Activated naive CD4-positive, alpha-beta T cell treated with anti-CD3 and anti-CD28 coated beads, Interleukin-2, amount 10 ng/mL, durations not matched to agents 7 days and 5 days (primary cell): ENCODE measurements at regions of chr2 and their contacts with region 1.

Region 1: GRCh38 chr2:176454893-176455811 is 185.9 kb downstream of the MTX2 start:
- DNase-seq: peak; percentile 87
- H3K4me3 Mint-ChIP-seq: no peak overlapping the region
- H3K27ac Mint-ChIP-seq: no peak overlapping the region
- H3K4me1 Mint-ChIP-seq: no peaks in the 10 kb centered on the region
- H3K27me3 Mint-ChIP-seq: peaks cover 40% of the 10 kb centered on the region

Region 2: GRCh38 chr2:176186024-176186423 is 269.1 kb before region 1 on chr2:
- CTCF ChIA-PET with region 1: no interaction called
- DNase-seq: no peak
- H3K4me3 Mint-ChIP-seq: no peak overlapping the region
- H3K27ac Mint-ChIP-seq: no peak overlapping the region
- H3K4me1 Mint-ChIP-seq: peaks cover 23% of the 10 kb centered on the region
- H3K27me3 Mint-ChIP-seq: peaks cover 86% of the 10 kb centered on the region

Region 3: DNA sequence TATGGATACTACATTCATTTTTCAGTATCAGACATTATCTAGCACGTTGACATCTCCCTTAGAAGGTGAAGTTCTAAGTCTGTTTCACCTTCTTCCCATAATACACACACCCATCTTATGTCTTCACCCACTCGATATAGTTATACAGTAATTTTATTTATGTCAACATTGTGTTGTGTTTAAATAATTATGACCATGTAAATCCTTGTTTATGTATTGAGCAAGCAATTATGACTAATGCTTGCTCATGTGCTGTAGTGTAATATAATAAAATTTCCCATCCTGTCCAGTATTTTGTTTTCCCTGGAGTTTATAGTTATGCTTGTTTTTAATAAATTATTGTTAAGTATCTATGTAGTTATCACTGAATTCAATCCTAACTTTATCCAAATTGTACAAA is 22.7 kb before region 1 on chr2:
- CTCF ChIA-PET with region 1: no interaction called
- DNase-seq: no peak
- H3K4me3 Mint-ChIP-seq: no peak overlapping the region
- H3K27ac Mint-ChIP-seq: no peak overlapping the region
- H3K4me1 Mint-ChIP-seq: no peaks in the 10 kb centered on the region
- H3K27me3 Mint-ChIP-seq: no peaks in the 10 kb centered on the region

Region 4: DNA sequence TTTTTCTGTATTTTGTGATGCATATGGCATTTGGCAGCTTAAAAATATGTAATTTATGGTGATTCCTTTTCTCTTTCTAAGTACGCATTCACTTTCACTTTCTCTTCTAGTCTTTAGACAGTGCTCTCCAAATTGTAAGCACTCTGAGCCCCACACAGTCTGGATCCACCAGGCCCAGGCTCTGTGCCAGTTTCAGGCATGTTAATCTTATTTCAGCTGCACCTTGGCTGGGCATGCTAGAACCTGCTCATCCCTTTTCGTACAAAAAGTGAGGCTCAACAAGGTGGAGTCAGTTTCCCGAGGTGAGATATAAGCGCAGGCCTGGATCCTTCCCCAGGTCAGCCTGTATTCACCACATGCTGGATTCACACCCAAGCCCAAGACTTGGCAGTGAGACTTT is 18.0 kb after region 1 on chr2:
- CTCF ChIA-PET with region 1: interaction called, 10 read pairs
- DNase-seq: peak; percentile 51
- H3K4me3 Mint-ChIP-seq: peak overlapping the region; percentile 56
- H3K27ac Mint-ChIP-seq: peak overlapping the region; percentile 2
- H3K4me1 Mint-ChIP-seq: peaks cover 18% of the 10 kb centered on the region
- H3K27me3 Mint-ChIP-seq: peaks cover 5% of the 10 kb centered on the region

Region 5: GRCh38 chr2:176508984-176509740 is 54.0 kb after region 1 on chr2:
- CTCF ChIA-PET with region 1: no interaction called
- DNase-seq: no peak
- H3K4me3 Mint-ChIP-seq: no peak overlapping the region
- H3K27ac Mint-ChIP-seq: no peak overlapping the region
- H3K4me1 Mint-ChIP-seq: no peaks in the 10 kb centered on the region
- H3K27me3 Mint-ChIP-seq: peaks cover 7% of the 10 kb centered on the region

Region 6: GRCh38 chr2:176554101-176555048 is 99.2 kb after region 1 on chr2:
- CTCF ChIA-PET with region 1: interaction called, 19 read pairs
- DNase-seq: peak; percentile 25
- H3K4me3 Mint-ChIP-seq: peak overlapping the region; percentile 66
- H3K27ac Mint-ChIP-seq: no peak overlapping the region
- H3K4me1 Mint-ChIP-seq: peaks cover 12% of the 10 kb centered on the region
- H3K27me3 Mint-ChIP-seq: peaks cover 47% of the 10 kb centered on the region